Mammary epithelial cell (primary cell): ENCODE measurements at regions of chr19 and their contacts with region 1.

Region 1: DNA sequence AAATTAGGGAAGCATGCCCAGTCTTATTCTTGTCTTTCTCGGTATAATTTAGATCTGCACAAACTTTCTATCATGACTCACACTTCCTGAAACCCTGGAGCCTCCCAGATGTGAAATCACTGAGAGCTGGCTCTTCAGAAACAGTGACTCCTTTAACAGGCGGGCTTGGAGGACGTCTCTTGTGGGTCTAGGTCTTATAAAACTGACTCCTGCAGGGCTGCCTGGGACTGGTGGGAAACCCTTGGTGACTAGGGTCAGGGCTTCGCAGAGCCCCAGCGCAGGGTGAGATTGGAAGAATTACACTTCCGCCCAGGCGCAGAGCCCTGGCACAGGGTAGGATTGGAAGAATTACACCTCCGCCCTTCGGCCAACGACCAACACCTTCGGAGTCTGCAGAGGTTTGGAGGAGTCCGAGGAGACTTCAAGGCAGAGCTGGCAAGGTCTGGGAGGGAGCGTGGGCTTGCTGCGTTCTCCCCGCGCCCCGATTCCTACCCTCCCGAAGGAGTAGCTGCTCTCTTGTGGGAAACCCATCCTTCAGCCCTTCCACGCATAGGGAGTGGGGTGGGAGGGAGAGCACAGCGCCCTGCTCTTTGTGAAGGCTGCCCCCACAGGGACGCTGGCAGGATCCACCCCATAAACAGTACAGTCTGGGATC is 43.4 kb upstream of the MAP3K10 start:
- DNase-seq: peak; percentile 82
- H3K4me3 ChIP-seq: no peak overlapping the region
- H3K27ac ChIP-seq: no peak overlapping the region
- H3K4me1 ChIP-seq: peaks cover 11% of the 10 kb centered on the region
- H3K27me3 ChIP-seq: no peaks in the 10 kb centered on the region
- CTCF ChIP-seq: no peak

Region 2: GRCh38 chr19:40159744-40160143 is 11.9 kb after region 1 on chr19:
- CTCF ChIA-PET with region 1: no interaction called
- dilution Hi-C with region 1: no loop called
- in situ Hi-C with region 1: no loop called
- intact Hi-C with region 1: no loop called
- DNase-seq: no peak
- H3K4me3 ChIP-seq: no peak overlapping the region
- H3K27ac ChIP-seq: no peak overlapping the region
- H3K4me1 ChIP-seq: no peaks in the 10 kb centered on the region
- H3K27me3 ChIP-seq: no peaks in the 10 kb centered on the region
- CTCF ChIP-seq: no peak

Region 3: GRCh38 chr19:40221858-40222837 is 74.3 kb after region 1 on chr19:
- CTCF ChIA-PET with region 1: no interaction called
- dilution Hi-C with region 1: no loop called
- in situ Hi-C with region 1: loop called in 1 of 2 experiments (anchors 5 kb)
- intact Hi-C with region 1: no loop called
- DNase-seq: peak; percentile 78
- H3K4me3 ChIP-seq: no peak overlapping the region
- H3K27ac ChIP-seq: no peak overlapping the region
- H3K4me1 ChIP-seq: peaks cover 26% of the 10 kb centered on the region
- H3K27me3 ChIP-seq: no peaks in the 10 kb centered on the region
- CTCF ChIP-seq: peak; percentile 75 to 85